Naive thymus-derived CD4-positive, alpha-beta T cell (primary cell): ENCODE measurements at regions of chr16 and their contacts with region 1.

Region 1: GRCh38 chr16:72066747-72067146 is 3.7 kb downstream of the HPR start:
- DNase-seq: peak in 6 of 9 donors; percentile 5 to 32 (median 16)
- ATAC-seq: peak; percentile 38
- H3K4me3 ChIP-seq: no peak overlapping the region
- H3K4me3 Mint-ChIP-seq: no peak overlapping the region
- H3K27ac ChIP-seq: no peak overlapping the region
- H3K27ac Mint-ChIP-seq: no peak overlapping the region
- H3K4me1 ChIP-seq: no peaks in the 10 kb centered on the region
- H3K4me1 Mint-ChIP-seq: no peaks in the 10 kb centered on the region
- H3K27me3 ChIP-seq: no peaks in the 10 kb centered on the region
- H3K27me3 Mint-ChIP-seq: no peaks in the 10 kb centered on the region

Region 2: DNA sequence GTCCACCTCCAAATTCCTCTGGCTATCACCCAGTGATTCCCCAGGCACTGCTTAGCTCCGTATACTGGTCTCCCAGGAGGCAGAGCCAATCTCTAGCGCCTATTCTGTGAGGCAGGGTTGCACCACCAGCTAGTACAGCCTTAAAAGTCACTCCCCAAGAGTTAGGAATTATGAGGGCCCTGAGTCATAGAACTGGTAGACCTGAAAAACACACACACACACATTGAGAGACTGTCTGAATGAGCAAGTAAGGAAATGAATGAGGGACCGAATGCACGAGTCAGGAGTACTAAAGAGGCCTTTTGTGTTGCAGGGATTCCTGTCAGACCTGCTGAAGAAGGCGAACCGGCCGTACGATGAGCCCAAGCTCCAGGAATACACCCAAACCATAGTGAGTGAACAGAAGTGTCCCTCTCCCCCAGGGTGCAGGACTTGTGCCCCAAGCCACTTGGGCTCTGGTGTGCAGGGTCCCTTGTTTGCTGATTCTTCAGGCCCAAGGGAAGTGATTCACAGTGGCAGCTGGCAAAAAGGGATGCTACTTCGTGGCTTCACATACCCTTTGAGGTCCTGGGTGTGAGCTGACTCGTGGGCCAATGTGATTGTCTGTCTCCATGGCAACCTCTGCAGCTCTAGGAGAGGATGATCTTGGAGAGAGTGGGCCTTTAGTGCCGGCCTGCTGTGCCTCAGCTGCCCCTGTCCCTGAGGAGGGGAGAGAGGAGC is 683.5 kb before region 1 on chr16:
- CTCF ChIA-PET with region 1: no interaction called
- POLR2A ChIA-PET with region 1: no interaction called
- intact Hi-C with region 1: no loop called
- DNase-seq: no peak
- ATAC-seq: peak; percentile 22
- H3K4me3 ChIP-seq: no peak overlapping the region
- H3K4me3 Mint-ChIP-seq: no peak overlapping the region
- H3K27ac ChIP-seq: no peak overlapping the region
- H3K27ac Mint-ChIP-seq: no peak overlapping the region
- H3K4me1 ChIP-seq: no peaks in the 10 kb centered on the region
- H3K4me1 Mint-ChIP-seq: peaks cover 0 to 8% (median 5%) of the 10 kb centered on the region in 7 donors
- H3K27me3 ChIP-seq: peaks cover 0 to 3% of the 10 kb centered on the region in 2 donors
- H3K27me3 Mint-ChIP-seq: peaks cover 4 to 55% (median 47%) of the 10 kb centered on the region in 5 donors

Region 3: GRCh38 chr16:72099377-72099818 is 32.7 kb after region 1 on chr16:
- CTCF ChIA-PET with region 1: interaction called, 3 read pairs
- POLR2A ChIA-PET with region 1: no interaction called
- intact Hi-C with region 1: loop called (anchors 1 kb)
- DNase-seq: peak in 6 of 9 donors; percentile 11 to 54 (median 31)
- ATAC-seq: peak; percentile 90
- H3K4me3 ChIP-seq: no peak overlapping the region
- H3K4me3 Mint-ChIP-seq: no peak overlapping the region
- H3K27ac ChIP-seq: no peak overlapping the region
- H3K27ac Mint-ChIP-seq: peak overlapping the region in 1 of 9 donors; percentile 51
- H3K4me1 ChIP-seq: peaks cover 6 to 10% of the 10 kb centered on the region in 2 donors
- H3K4me1 Mint-ChIP-seq: peaks cover 15 to 34% (median 27%) of the 10 kb centered on the region in 7 donors
- H3K27me3 ChIP-seq: no peaks in the 10 kb centered on the region
- H3K27me3 Mint-ChIP-seq: no peaks in the 10 kb centered on the region